ENCODE measurements at regions of chr2 and their contacts with region 1.

Region 1: DNA sequence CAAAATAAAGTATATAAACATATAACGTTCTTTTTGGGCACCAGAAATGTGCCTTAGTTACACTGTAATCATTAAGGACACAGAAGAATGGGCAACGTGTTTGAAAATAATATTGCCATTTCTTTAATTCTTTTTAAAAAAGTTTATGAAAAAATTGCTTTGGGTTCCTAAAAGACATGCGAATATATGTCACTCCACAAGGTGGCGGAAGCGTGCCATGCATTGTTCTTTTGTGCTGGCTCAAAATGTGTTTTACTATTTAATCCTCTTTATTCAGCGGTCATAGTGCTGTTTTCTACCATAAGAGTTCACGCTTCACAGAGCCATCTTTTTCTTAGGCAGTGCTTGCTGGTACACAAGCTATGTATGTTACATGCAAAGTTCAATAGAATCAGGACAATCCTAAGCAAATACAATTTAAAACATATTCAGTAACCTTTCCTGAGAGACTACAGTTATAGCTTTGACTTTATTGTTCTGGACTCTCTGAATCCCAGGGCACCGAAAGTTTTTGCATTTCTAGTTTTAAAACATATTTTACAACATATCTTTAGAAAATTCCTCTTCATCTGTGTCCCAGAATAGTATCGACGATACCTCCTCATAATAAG is 147.8 kb upstream of the ERBB4 start:
- DNase-seq: peak; percentile 83
- ATAC-seq: peak; percentile 70
- H3K4me3 Mint-ChIP-seq: no peak overlapping the region
- H3K27ac Mint-ChIP-seq: peak overlapping the region; percentile 39
- H3K4me1 Mint-ChIP-seq: peaks cover 4% of the 10 kb centered on the region
- H3K27me3 Mint-ChIP-seq: no peaks in the 10 kb centered on the region
- CTCF ChIP-seq: peak; percentile 89

Region 2: GRCh38 chr2:212489719-212490346 is 196.6 kb before region 1 on chr2:
- CTCF ChIA-PET with region 1: no interaction called
- POLR2A ChIA-PET with region 1: no interaction called
- intact Hi-C with region 1: no loop called
- DNase-seq: no peak
- ATAC-seq: no peak
- H3K4me3 Mint-ChIP-seq: no peak overlapping the region
- H3K27ac Mint-ChIP-seq: no peak overlapping the region
- H3K4me1 Mint-ChIP-seq: no peaks in the 10 kb centered on the region
- H3K27me3 Mint-ChIP-seq: no peaks in the 10 kb centered on the region
- CTCF ChIP-seq: no peak

Region 3: DNA sequence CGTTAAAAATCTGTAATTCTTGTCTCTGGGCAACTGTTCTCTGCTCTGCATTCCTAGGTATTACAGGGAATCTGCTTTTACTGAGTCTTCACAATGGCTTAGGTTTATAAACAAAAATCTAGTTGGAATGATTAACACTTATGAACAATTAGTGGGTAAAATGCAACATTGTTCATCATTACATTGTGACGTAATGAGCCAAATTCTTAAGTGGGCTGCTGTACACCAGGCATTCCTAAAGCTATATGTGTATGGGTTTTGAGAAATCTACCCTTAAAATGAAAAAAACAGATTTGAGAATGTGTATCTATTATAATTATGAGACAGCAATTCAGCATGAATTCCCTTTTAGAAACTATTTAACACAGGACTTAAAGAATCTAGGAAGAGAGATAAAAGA is 106.3 kb before region 1 on chr2:
- CTCF ChIA-PET with region 1: no interaction called
- POLR2A ChIA-PET with region 1: no interaction called
- intact Hi-C with region 1: no loop called
- DNase-seq: no peak
- ATAC-seq: no peak
- H3K4me3 Mint-ChIP-seq: no peak overlapping the region
- H3K27ac Mint-ChIP-seq: no peak overlapping the region
- H3K4me1 Mint-ChIP-seq: no peaks in the 10 kb centered on the region
- H3K27me3 Mint-ChIP-seq: peaks cover 1% of the 10 kb centered on the region
- CTCF ChIP-seq: no peak

Region 4: DNA sequence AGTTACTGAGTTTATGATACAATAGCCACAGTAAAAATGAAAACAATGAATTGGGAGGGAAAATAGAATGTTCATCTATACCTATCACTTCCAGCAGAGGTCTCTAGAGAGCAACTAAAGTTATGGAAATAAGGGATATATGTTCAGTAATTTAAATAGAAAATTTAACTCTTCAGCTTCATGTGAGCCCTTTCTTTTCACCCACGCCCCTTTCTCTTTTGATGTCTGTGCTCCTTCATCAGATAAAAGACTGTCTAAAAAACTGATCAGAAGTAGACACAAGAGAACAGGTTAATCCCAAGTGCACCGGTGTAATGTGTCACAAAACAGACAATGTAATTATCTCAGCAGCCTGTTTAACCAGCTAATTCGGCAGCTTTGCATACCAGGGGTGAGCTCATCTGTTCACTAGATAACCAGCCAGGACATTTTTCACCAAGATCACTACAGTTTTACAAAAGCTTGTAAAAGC is 90.7 kb after region 1 on chr2:
- CTCF ChIA-PET with region 1: interaction called, 10 read pairs
- POLR2A ChIA-PET with region 1: no interaction called
- intact Hi-C with region 1: loop called (anchors 10 kb)
- DNase-seq: no peak
- ATAC-seq: peak; percentile 72
- H3K4me3 Mint-ChIP-seq: no peak overlapping the region
- H3K27ac Mint-ChIP-seq: no peak overlapping the region
- H3K4me1 Mint-ChIP-seq: peaks cover 3% of the 10 kb centered on the region
- H3K27me3 Mint-ChIP-seq: no peaks in the 10 kb centered on the region
- CTCF ChIP-seq: peak; percentile 62

Region 5: GRCh38 chr2:212892193-212892592 is 205.8 kb after region 1 on chr2:
- CTCF ChIA-PET with region 1: no interaction called
- POLR2A ChIA-PET with region 1: no interaction called
- intact Hi-C with region 1: loop called (anchors 10 kb)
- DNase-seq: peak; percentile 4
- ATAC-seq: no peak
- H3K4me3 Mint-ChIP-seq: no peak overlapping the region
- H3K27ac Mint-ChIP-seq: no peak overlapping the region
- H3K4me1 Mint-ChIP-seq: peaks cover 2% of the 10 kb centered on the region
- H3K27me3 Mint-ChIP-seq: no peaks in the 10 kb centered on the region
- CTCF ChIP-seq: no peak

Measured in activated CD8-positive, alpha-beta T cell treated with anti-CD3 and anti-CD28 coated beads for 36 hours (primary cell).